Left ventricle myocardium inferior (tissue), 1 donor: ENCODE measurements at regions of chr9 and their contacts with region 1.

Region 1: GRCh38 chr9:130539473-130540223 is 39.7 kb upstream of the FUBP3 start:
- DNase-seq: no peak
- H3K4me3 ChIP-seq: no peak overlapping the region
- H3K27ac ChIP-seq: no peak overlapping the region
- H3K4me1 ChIP-seq: peaks cover 20% of the 10 kb centered on the region
- H3K27me3 ChIP-seq: peaks cover 80% of the 10 kb centered on the region
- CTCF ChIP-seq: no peak

Region 2: DNA sequence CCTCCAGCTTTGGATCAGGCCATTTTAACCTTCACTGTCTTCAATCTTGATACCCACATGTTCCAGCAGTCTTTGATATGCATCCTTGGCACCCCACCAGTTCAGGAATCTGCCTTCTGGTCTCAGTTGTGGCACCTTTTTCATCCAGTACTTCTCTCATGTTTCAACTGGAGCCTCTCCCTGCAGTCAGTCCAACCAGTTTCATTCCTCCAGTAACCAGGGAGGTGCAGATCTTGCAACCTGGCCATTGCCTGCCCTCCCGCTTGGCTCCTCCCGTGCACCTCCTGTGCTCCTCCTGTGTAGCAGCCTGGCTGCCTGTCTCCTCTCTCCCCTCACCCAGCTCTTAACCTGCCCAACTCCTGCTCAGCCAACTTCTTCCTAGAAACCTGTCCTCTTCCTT is 60.0 kb after region 1 on chr9:
- intact Hi-C with region 1: no loop called
- DNase-seq: no peak
- H3K4me3 ChIP-seq: no peak overlapping the region
- H3K27ac ChIP-seq: no peak overlapping the region
- H3K4me1 ChIP-seq: peaks cover 9% of the 10 kb centered on the region
- H3K27me3 ChIP-seq: no peaks in the 10 kb centered on the region
- CTCF ChIP-seq: no peak

Region 3: DNA sequence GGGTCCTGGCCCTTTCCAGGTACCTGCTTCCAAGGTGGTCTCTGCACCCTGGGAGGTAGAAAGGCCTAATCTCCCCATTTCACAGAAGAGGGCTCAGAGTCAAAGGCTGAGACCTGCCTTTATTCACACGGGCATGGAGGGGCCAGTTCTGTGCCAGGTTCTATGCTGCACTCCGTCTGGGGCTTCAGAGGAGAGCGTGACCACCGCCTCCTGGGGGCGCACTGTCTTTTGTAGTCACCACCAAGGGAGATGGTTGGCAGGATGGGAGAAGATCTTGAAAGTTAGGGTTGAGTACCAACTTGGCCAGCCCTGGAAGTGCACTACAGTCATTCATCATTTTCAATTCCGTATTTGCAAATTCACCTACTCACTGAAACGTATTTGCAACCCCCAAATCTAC is 101.0 kb after region 1 on chr9:
- intact Hi-C with region 1: loop called (anchors 5 kb)
- DNase-seq: no peak
- H3K4me3 ChIP-seq: no peak overlapping the region
- H3K27ac ChIP-seq: no peak overlapping the region
- H3K4me1 ChIP-seq: no peaks in the 10 kb centered on the region
- H3K27me3 ChIP-seq: no peaks in the 10 kb centered on the region
- CTCF ChIP-seq: no peak